Sciatic nerve (tissue), 2 donors: ENCODE measurements at regions of chr3 and their contacts with region 1.

Region 1: GRCh38 chr3:115301364-115301860 is 154.3 kb upstream of the ZBTB20 start:
- DNase-seq: no peak
- ATAC-seq: no peak

Region 2: DNA sequence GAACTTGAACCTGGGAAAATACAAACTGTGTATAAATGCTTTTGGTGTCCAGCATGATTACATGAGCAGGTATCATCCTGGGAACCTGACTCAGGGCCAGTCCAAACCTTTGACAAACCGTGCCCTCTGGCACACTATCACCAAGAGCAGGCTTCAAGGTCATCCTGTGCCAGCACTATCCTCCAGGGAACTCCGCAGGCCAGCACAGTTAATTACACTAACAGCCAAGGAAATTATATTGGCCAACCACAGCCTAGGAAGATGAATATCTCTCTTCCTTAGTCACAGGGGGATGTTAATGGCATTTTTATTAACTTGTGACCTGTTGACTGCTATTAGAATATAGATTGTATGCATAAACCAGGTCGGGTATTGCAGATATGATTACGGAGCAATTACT is 1670.1 kb after region 1 on chr3:
- intact Hi-C with region 1: loop called (anchors 10 kb)
- DNase-seq: no peak
- ATAC-seq: no peak